ENCODE measurements at regions of chrX and their contacts with region 1.

Region 1: GRCh38 chrX:154534862-154535670 is 11.6 kb downstream of the G6PD start:
- DNase-seq: peak; percentile 85 to 94 (median 90)
- ATAC-seq: peak; percentile 69 to 95 (median 90)
- H3K4me3 ChIP-seq: no peak overlapping the region
- H3K27ac ChIP-seq: peak overlapping the region in 7 of 12 donors; percentile 25 to 70 (median 53)
- H3K4me1 ChIP-seq: peaks cover 0 to 5% (median 4%) of the 10 kb centered on the region in 12 donors
- H3K27me3 ChIP-seq: no peaks in the 10 kb centered on the region
- CTCF ChIP-seq: peak; percentile 80 to 100 (median 96)
- POLR2A ChIP-seq: no peak

Region 2: DNA sequence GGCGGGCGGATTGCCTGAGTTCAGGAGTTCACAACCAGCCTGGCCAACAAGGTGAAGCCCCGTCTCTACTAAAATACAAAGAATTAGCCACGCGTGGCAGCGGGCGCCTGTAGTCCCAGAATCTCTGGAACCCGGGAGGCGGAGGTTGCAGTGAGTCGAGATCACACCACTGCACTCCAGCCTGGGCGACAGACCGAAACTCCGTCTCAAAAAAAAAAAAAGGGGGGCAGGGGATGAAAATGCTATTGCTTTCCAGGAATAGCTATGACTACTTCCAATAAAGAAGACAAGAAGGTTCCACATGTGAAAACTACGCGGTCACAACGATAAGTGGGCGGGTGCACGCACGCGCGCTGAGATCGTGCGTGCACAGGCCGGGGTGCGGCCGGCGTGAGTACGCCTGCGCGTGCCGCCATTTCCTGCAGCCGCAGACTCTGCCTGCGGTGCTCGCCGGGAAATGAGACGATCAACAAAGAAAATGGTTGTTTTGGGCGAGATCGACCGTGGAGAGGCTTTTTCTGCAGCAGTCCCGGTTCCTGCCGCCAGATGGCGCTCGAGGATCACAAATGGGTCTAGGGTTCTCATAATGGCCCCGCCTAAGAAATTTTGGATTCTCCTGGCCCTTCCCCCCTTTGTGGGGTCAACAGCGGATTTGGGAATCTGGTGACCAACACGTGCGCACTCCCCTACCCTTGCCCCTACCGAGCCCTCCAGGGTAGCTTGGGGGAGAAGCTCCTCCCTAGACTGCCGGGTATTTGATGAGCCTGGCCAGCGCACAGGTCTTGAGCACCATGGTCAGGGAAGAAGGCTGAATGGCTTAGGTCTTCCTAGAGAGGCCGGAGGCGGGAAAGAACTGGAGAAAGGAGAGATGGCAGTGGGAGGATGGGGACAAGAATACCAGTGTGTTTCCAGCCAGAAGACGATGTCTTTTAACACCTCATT is 1576.3 kb before region 1 on chrX:
- intact Hi-C with region 1: loop called in 1 of 10 experiments (anchors 2 kb)
- DNase-seq: peak; percentile 85 to 92 (median 88)
- ATAC-seq: peak; percentile 92 to 99 (median 98)
- H3K4me3 ChIP-seq: peak overlapping the region in 10 of 12 donors; percentile 19 to 51 (median 39)
- H3K27ac ChIP-seq: peak overlapping the region in 8 of 12 donors; percentile 47 to 74 (median 55)
- H3K4me1 ChIP-seq: peaks cover 0 to 8% (median 0%) of the 10 kb centered on the region in 12 donors
- H3K27me3 ChIP-seq: peaks cover 0 to 4% (median 0%) of the 10 kb centered on the region in 9 donors
- CTCF ChIP-seq: peak; percentile 71 to 92 (median 80)
- POLR2A ChIP-seq: no peak

Region 3: GRCh38 chrX:153763989-153764755 is 770.9 kb before region 1 on chrX and contains the start of gene PLXNB3:
- intact Hi-C with region 1: loop called in 1 of 10 experiments (anchors 5 kb)
- DNase-seq: peak; percentile 66 to 88 (median 75)
- ATAC-seq: peak; percentile 52 to 89 (median 81)
- H3K4me3 ChIP-seq: peak within 1 kb of the TSS in 3 of 12 donors; percentile 3 to 21 (median 19)
- H3K27ac ChIP-seq: peak within 1 kb of the TSS in 7 of 12 donors; percentile 9 to 81 (median 28)
- H3K4me1 ChIP-seq: peaks cover 0 to 26% (median 5%) of the 10 kb centered on the region in 12 donors
- H3K27me3 ChIP-seq: peaks cover 0 to 4% (median 0%) of the 10 kb centered on the region in 9 donors
- CTCF ChIP-seq: peak; percentile 68 to 93 (median 78)
- POLR2A ChIP-seq: no peak
- total RNA-seq, gene PLXNB3: 1.6 to 8.6 (median 3.5) TPM

Region 4: GRCh38 chrX:154115071-154115470 is 420.0 kb before region 1 on chrX:
- intact Hi-C with region 1: no loop called
- DNase-seq: no peak
- ATAC-seq: no peak
- H3K4me3 ChIP-seq: no peak overlapping the region
- H3K27ac ChIP-seq: no peak overlapping the region
- H3K4me1 ChIP-seq: no peaks in the 10 kb centered on the region
- H3K27me3 ChIP-seq: peaks cover 0 to 31% (median 0%) of the 10 kb centered on the region in 9 donors
- CTCF ChIP-seq: no peak
- POLR2A ChIP-seq: no peak

Region 5: DNA sequence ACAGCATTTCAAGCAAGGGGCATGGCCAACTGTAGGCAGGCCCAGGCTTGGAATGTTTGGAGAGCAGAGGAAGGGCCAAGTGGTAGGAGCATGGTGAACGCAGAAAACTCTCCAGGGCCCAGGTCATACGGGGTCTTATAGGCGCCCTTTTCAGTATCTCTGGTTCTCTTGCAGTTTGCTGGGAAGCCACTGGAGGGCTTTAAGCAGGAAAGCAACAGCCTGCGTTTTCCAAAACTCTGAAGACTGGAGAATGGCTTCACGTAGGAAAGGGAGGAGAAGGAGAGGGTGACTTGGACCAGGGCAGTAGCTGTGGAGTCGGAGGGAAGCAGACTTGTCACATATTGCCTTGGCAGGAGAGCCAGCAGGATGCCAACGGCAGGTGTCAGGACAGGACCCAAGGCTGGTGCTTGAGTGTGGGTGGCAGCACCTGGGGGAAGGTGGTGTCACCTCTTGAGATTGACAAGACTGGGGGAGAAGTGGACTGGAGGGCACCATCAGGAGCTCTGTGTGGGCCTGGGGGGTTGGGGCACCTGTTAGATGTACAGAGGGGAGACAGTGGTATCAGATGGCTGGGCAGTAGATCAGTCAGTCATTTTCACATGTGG is 217.6 kb before region 1 on chrX:
- intact Hi-C with region 1: loop called in 3 of 10 experiments (anchors 5 kb)
- DNase-seq: peak in 1 of 5 donors; percentile 21
- ATAC-seq: peak in 2 of 4 donors; percentile 41 to 53
- H3K4me3 ChIP-seq: no peak overlapping the region
- H3K27ac ChIP-seq: no peak overlapping the region
- H3K4me1 ChIP-seq: peaks cover 0 to 4% (median 0%) of the 10 kb centered on the region in 12 donors
- H3K27me3 ChIP-seq: peaks cover 0 to 6% (median 0%) of the 10 kb centered on the region in 9 donors
- CTCF ChIP-seq: peak; percentile 22 to 61 (median 36)
- POLR2A ChIP-seq: no peak

Region 6: DNA sequence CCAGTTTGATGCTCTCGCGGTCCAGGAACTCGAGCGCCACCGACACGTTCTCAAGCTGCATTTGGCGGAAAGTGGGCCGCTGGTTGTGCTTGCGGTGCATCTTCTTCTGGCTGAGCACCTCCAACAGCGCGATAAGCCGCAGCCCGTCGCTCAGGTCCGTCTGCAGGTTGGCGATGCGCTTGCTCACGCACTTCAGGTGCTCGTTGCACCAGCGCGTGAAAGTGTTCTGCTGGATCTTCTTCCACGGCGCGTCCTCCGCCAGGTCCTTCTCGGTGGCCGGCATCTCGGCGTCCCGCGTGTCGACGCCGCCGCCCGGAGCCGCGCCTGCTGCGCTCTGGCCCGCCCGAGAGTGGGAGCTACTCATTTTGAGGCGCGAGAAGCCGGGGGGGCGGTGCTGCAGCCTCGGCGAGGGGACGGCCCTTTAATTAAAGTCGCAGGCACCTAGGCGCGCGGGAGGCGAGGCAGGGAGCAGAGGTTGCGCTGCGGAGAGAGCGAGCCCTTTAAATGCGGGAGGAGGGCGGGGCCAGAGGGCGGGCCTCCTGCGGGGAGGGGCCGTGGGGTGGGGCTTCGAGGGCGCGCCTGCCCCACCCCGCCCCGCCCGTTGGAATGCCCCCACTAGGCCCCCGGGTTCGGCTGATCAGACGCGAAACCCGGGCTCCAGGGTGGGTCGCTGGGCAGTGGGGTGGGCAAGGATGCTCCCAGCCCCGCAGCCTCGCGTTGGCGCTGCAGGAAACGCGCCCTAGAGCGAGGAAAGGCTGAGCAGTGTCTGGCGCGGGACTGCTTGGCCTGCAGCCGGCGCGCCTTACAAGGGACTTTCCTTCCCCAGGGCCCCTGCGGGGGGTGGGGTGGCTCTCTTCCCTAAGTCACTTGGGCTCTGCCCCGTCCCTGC is 163.9 kb before region 1 on chrX:
- intact Hi-C with region 1: loop called in 4 of 10 experiments (anchors 2 to 5 kb)
- DNase-seq: peak; percentile 94 to 97 (median 96)
- ATAC-seq: peak; percentile 47 to 73 (median 66)
- H3K4me3 ChIP-seq: peak overlapping the region; percentile 73 to 99 (median 82)
- H3K27ac ChIP-seq: peak overlapping the region; percentile 78 to 100 (median 96)
- H3K4me1 ChIP-seq: peaks cover 0 to 59% (median 30%) of the 10 kb centered on the region in 12 donors
- H3K27me3 ChIP-seq: no peaks in the 10 kb centered on the region
- CTCF ChIP-seq: no peak
- POLR2A ChIP-seq: peak; percentile 93 to 99

Region 7: GRCh38 chrX:154397819-154398724 is 137.0 kb before region 1 on chrX and contains the start of gene RPL10:
- intact Hi-C with region 1: loop called in 1 of 10 experiments (anchors 5 kb)
- DNase-seq: peak; percentile 92 to 97 (median 96)
- ATAC-seq: peak; percentile 87 to 97 (median 92)
- H3K4me3 ChIP-seq: peak within 1 kb of the TSS; percentile 67 to 99 (median 86)
- H3K27ac ChIP-seq: peak within 1 kb of the TSS; percentile 98 to 100 (median 98)
- H3K4me1 ChIP-seq: peaks cover 0 to 16% (median 10%) of the 10 kb centered on the region in 12 donors
- H3K27me3 ChIP-seq: no peaks in the 10 kb centered on the region
- CTCF ChIP-seq: no peak
- POLR2A ChIP-seq: peak in 1 of 2 donors; percentile 91
- total RNA-seq, gene RPL10: 1,381 to 3,072 (median 2,052) TPM